Posterior cingulate gyrus (tissue), 11 donors: ENCODE measurements at regions of chr17 and their contacts with region 1.

Region 1: DNA sequence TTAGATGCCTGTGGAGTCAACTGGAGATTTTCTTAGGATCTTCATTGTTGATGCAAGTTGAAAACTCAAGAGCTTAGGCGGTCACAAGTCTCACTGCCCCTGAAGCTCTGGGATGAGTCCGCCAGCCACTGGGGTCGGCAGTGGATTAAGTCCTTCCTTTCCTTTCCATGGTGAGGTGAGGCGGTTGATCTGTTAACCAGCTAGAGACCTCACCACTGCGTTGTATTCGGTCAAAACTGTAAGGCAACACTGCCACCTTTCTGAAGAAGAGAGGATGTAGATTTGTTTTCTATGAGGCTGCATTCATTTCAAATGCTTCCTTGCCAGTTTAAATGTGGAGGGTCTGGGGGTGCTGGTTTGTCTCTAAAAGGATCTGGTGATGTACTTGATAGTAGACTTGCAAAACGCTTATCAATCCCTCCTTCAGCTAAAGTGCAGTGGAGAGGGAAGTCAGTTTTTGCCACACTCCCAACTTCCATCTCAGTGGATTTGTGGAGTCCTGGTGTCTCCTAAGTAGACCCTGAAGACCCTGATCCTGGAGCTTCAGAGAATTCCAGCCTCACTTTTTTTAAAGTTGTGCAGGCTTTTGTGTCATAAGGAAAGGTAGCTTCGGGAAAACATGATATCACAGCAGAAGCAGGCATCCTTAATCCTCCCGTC is 1.7 kb downstream of the MYOCD start:
- DNase-seq: no peak

Region 2: DNA sequence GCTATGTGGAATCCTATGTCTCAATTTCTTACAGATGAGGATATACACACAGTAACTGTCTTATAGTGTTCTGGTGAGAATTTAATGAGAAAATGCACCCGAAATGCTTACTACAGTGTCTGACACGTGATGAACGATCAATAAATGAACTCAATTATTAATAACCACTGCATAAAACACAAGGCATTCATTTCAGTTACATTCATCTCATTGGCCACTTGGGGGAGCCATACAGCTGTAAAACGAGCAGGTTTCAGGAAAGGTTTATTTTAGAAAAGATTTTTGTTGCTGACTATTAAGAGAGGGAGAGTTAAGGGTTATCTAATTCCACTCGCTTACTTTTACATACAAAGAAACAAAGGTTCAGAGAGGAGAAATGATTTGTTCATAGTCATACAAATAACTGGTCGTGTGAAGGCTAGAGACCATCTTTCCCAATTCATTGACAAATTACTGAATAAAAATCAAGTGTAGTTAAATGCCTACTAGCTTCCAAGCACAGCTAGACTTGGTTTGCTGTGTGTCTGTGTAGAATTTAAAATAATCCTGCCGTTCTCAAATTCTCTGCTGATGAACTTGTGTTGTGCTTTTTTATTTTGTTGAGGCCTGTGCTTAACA is 486.7 kb before region 1 on chr17:
- intact Hi-C with region 1: loop called (anchors 2 kb)
- DNase-seq: peak in 3 of 10 donors; percentile 9 to 27 (median 15)

Region 3: GRCh38 chr17:12256380-12256995 is 410.9 kb before region 1 on chr17:
- intact Hi-C with region 1: loop called (anchors 2 kb)
- DNase-seq: peak in 4 of 10 donors; percentile 15 to 54 (median 35)

Region 4: DNA sequence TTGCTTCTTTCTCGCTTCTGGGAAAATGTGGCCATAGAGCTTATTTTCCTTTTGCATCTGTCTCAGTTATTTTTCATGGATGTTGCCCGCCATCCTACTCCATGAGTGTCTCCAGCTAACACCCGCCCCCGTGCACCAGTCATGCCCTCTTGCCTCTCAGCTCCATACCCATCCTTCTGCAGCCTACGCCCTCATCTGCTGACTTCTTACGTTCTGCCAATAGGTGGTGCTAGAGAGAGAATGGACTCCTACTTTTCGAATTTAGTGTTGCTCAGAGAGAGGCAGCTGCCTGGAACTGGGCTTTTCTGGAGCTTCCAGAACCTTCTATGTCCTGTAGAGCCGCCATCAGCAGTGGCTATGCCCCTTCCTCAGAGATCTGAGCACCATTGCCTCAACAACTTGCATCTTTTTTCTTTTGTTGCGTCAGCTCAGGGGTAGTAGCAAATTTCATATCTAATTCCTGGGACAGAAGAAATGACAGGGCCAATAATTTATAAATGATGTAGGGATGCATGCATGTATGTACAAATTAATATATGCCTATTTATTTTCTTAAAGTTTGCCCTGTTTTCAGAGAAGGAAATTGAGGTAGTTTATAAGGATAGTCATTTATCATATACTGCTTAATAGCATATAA is 121.4 kb before region 1 on chr17:
- intact Hi-C with region 1: loop called (anchors 10 kb)
- DNase-seq: peak in 3 of 10 donors; percentile 10 to 73 (median 18)